ENCODE measurements at regions of chr17 and their contacts with region 1.

Region 1: DNA sequence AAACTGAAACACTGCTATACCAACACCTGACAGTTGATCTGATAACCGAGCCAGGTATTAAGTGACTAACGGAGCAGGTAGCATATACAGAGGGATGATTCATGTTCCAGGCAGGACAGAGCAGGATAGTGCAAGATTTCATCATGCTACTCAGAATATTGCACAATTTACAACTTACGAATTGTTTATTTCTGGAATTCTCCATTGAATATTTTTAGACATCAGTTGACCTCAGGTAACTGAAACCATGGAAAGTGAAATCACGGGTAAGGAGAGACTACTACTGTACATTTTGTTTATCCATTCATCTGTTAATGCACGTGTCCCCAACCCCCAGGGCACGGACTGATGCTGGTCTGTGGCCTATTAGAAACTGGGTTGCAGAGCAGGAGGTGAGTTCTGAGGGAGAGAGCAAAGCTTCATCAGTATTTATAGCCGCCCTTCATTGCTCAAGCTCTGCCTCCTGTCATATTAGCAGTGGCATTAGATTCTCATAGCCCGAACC is 14.5 kb upstream of the PPM1E start:
- DNase-seq: no peak
- ATAC-seq: no peak
- H3K4me3 ChIP-seq: no peak overlapping the region
- H3K4me3 Mint-ChIP-seq: no peak overlapping the region
- H3K27ac ChIP-seq: no peak overlapping the region
- H3K27ac Mint-ChIP-seq: no peak overlapping the region
- H3K4me1 ChIP-seq: no peaks in the 10 kb centered on the region
- H3K4me1 Mint-ChIP-seq: no peaks in the 10 kb centered on the region
- H3K27me3 ChIP-seq: no peaks in the 10 kb centered on the region
- H3K27me3 Mint-ChIP-seq: no peaks in the 10 kb centered on the region

Region 2: GRCh38 chr17:58755577-58756245 is 14.5 kb after region 1 on chr17 and contains the start of gene PPM1E:
- CTCF ChIA-PET with region 1: no interaction called
- POLR2A ChIA-PET with region 1: no interaction called
- DNase-seq: peak in 34 of 35 experiments; percentile 1 to 53 (median 22)
- ATAC-seq: peak; percentile 72 to 84 (median 76)
- H3K4me3 ChIP-seq: peak within 1 kb of the TSS; percentile 45 to 80
- H3K4me3 Mint-ChIP-seq: peak within 1 kb of the TSS; percentile 83 to 86 (median 85)
- H3K27ac ChIP-seq: no peak within 1 kb of the TSS
- H3K27ac Mint-ChIP-seq: no peak within 1 kb of the TSS
- H3K4me1 ChIP-seq: peaks cover 6 to 17% of the 10 kb centered on the region in 2 experiments
- H3K4me1 Mint-ChIP-seq: peaks cover 13 to 15% (median 13%) of the 10 kb centered on the region in 3 donors
- H3K27me3 ChIP-seq: peaks cover 11 to 29% of the 10 kb centered on the region in 2 experiments
- H3K27me3 Mint-ChIP-seq: peaks cover 43 to 67% of the 10 kb centered on the region in 2 donors
- total RNA-seq, gene PPM1E: 0.03 TPM in 1 of 5 donors, not detected in the others

Region 3: DNA sequence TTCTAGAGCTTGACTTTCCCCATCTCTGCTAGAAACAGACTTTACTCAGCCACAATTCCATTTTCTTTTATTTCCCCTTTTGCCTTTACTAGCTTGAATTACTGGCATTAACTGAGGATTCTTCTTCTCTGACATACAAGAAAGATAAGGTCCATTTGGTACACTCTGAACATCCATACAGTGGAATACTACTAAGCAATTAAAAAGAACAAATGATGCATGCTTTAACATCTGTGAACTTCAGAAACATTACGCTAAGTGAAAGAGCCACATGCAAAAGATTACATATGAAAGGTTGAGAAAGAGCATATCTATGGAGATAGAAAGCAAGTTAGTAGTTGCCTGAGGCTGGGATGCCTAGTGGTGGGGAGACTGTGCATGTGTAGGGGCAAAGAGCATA is 145.3 kb after region 1 on chr17:
- CTCF ChIA-PET with region 1: no interaction called
- POLR2A ChIA-PET with region 1: interaction called in 1 of 2 experiments, 12 read pairs
- DNase-seq: no peak
- ATAC-seq: no peak
- H3K4me3 ChIP-seq: no peak overlapping the region
- H3K4me3 Mint-ChIP-seq: no peak overlapping the region
- H3K27ac ChIP-seq: no peak overlapping the region
- H3K27ac Mint-ChIP-seq: no peak overlapping the region
- H3K4me1 ChIP-seq: no peaks in the 10 kb centered on the region
- H3K4me1 Mint-ChIP-seq: no peaks in the 10 kb centered on the region
- H3K27me3 ChIP-seq: peaks cover 2 to 6% of the 10 kb centered on the region in 2 experiments
- H3K27me3 Mint-ChIP-seq: peaks cover 26 to 28% of the 10 kb centered on the region in 2 donors

Measured in T-cell (primary cell).